ENCODE measurements at regions of chr22 and their contacts with region 1.

Region 1: GRCh38 chr22:37508431-37508992 is 10.7 kb downstream of the CARD10 start:
- DNase-seq: peak; percentile 59 to 90
- H3K4me3 ChIP-seq: peak overlapping the region; percentile 3; the same call in 1 of the 2 replicates
- H3K27ac ChIP-seq: peak overlapping the region; percentile 74
- H3K4me1 ChIP-seq: peaks cover 61% of the 10 kb centered on the region
- H3K27me3 ChIP-seq: no peaks in the 10 kb centered on the region
- CTCF ChIP-seq: peak; percentile 37; the same call in 1 of the 2 replicates

Region 2: DNA sequence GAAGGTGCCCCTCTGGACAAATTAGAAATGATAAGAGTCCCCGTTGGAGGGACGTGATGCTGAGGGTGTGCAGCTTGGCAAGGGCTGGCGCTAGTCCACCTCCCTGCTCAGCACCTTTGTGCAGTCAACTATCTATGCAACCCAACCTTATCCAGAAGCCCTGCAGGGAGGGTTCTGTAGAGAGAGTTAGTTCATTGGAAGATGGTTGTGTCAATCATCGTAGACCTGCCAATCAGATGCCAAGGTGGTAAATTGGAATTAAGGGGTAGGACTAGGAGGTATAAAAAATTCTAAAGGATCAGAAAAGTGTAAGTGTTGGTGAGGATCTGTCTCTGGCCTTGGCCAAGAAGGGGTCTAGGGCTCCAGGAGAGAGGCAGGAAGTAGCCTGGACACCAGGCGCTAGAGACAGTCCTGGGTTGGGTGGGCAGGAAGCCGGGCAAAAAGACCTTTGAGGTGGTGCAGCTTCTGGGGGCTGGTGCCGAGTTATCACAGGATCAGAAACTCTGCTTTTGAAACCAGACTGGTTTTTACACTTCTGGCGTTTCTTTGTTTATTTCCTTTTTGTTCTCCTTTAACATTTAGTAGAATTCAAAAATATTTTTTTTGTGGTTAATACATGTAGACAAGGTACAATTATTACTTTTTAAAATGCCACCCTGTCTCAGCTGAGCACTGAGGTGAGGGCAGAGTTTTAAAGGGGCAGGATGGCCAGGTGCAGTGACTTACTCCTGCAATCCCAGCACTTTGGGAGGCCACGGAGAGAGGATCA is 322.1 kb before region 1 on chr22:
- CTCF ChIA-PET with region 1: no interaction called
- POLR2A ChIA-PET with region 1: no interaction called
- intact Hi-C with region 1: loop called (anchors 1 kb)
- DNase-seq: peak; percentile 71 to 80
- H3K4me3 ChIP-seq: peak overlapping the region; percentile 65
- H3K27ac ChIP-seq: peak overlapping the region; percentile 94
- H3K4me1 ChIP-seq: peaks cover 52% of the 10 kb centered on the region
- H3K27me3 ChIP-seq: no peaks in the 10 kb centered on the region
- CTCF ChIP-seq: no peak

Region 3: GRCh38 chr22:37526376-37526775 is 17.9 kb after region 1 on chr22:
- CTCF ChIA-PET with region 1: interaction called, 5 read pairs
- POLR2A ChIA-PET with region 1: interaction called, 6 read pairs
- intact Hi-C with region 1: loop called (anchors 2 kb)
- DNase-seq: peak in 1 of 2 experiments; percentile 51
- H3K4me3 ChIP-seq: no peak overlapping the region
- H3K27ac ChIP-seq: peak overlapping the region; percentile 87
- H3K4me1 ChIP-seq: peaks cover 45% of the 10 kb centered on the region
- H3K27me3 ChIP-seq: no peaks in the 10 kb centered on the region
- CTCF ChIP-seq: no peak

Region 4: DNA sequence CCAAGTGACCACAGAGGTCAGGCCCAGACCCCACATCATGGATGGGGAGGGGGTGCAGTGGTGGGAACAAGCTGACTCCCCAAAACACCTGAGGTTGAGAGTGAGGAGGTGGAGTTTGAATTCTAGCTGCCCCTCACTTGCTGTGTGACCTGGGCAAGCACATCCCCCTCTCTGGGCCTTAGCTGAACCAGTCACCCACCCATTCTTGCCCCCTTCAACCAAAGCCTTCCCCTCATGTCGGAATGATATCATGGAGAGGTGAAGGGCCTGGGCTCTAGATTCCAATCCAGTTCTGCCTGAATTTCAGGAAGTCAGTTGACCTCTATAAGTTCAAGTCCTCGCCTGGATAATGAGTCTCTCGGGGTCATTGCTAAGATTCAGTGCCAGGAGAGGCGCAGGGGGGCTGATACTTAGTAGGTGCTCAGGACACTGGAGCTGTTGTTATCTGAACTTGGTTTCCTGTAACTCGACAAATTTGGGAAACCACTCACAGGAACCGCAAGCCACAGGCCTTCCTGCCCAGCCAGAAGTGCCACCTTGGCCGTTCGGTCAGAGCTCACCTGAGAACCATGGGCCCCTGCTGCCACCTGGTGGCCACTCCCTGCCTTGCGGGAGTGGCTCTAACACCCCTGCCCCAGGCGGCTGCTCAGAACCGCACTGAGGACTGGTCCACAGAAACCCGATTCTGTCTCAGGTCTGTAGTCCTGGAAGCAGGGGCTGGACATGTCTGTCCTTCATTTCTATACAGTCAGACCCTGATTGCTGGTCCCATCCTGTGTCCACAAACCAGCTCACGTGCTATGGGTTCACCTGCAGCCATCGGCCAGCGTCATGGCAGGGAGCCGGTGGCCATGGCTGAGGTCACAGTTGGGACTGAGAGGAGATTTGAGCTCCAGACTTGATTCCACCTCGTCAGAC is 58.6 kb after region 1 on chr22:
- CTCF ChIA-PET with region 1: interaction called, 4 read pairs
- POLR2A ChIA-PET with region 1: no interaction called
- intact Hi-C with region 1: loop called (anchors 1 kb)
- DNase-seq: peak; percentile 93 to 98
- H3K4me3 ChIP-seq: no peak overlapping the region
- H3K27ac ChIP-seq: peak overlapping the region; percentile 81
- H3K4me1 ChIP-seq: peaks cover 91% of the 10 kb centered on the region
- H3K27me3 ChIP-seq: no peaks in the 10 kb centered on the region
- CTCF ChIP-seq: peak; percentile 99

Region 5: GRCh38 chr22:37588546-37589215 is 80.2 kb after region 1 on chr22:
- CTCF ChIA-PET with region 1: interaction called, 11 read pairs
- POLR2A ChIA-PET with region 1: no interaction called
- intact Hi-C with region 1: no loop called
- DNase-seq: peak in 1 of 2 experiments; percentile 66
- H3K4me3 ChIP-seq: no peak overlapping the region
- H3K27ac ChIP-seq: no peak overlapping the region
- H3K4me1 ChIP-seq: peaks cover 5% of the 10 kb centered on the region; the same call in 1 of the 2 replicates
- H3K27me3 ChIP-seq: no peaks in the 10 kb centered on the region
- CTCF ChIP-seq: no peak

Region 6: GRCh38 chr22:37676736-37677492 is 168.4 kb after region 1 on chr22:
- CTCF ChIA-PET with region 1: no interaction called
- POLR2A ChIA-PET with region 1: interaction called, 51 read pairs
- intact Hi-C with region 1: no loop called
- DNase-seq: peak; percentile 88 to 93
- H3K4me3 ChIP-seq: peak overlapping the region; percentile 56
- H3K27ac ChIP-seq: peak overlapping the region; percentile 69
- H3K4me1 ChIP-seq: peaks cover 56% of the 10 kb centered on the region
- H3K27me3 ChIP-seq: no peaks in the 10 kb centered on the region
- CTCF ChIP-seq: no peak

Region 7: GRCh38 chr22:38272373-38273134 is 764.0 kb after region 1 on chr22 and contains the start of gene TMEM184B:
- CTCF ChIA-PET with region 1: no interaction called
- POLR2A ChIA-PET with region 1: interaction called, 26 read pairs
- intact Hi-C with region 1: no loop called
- DNase-seq: peak in 1 of 2 experiments; percentile 86
- H3K4me3 ChIP-seq: peak within 1 kb of the TSS; percentile 90
- H3K27ac ChIP-seq: peak within 1 kb of the TSS; percentile 62
- H3K4me1 ChIP-seq: peaks cover 41% of the 10 kb centered on the region
- H3K27me3 ChIP-seq: no peaks in the 10 kb centered on the region
- CTCF ChIP-seq: no peak
- total RNA-seq, gene TMEM184B: 185 and 192 TPM in 2 replicates